ENCODE measurements at regions of chr12 and their contacts with region 1.

Region 1: GRCh38 chr12:106136263-106136662 is 2.5 kb downstream of the NUAK1 start:
- H3K4me3 ChIP-seq: no peak overlapping the region
- H3K27ac ChIP-seq: peak overlapping the region; percentile 8; the same call in 1 of the 2 replicates
- H3K4me1 ChIP-seq: peaks cover 18% of the 10 kb centered on the region
- CTCF ChIP-seq: peak; percentile 82

Region 2: GRCh38 chr12:105420659-105421240 is 715.5 kb before region 1 on chr12:
- CTCF ChIA-PET with region 1: interaction called, 55 read pairs
- POLR2A ChIA-PET with region 1: no interaction called
- H3K4me3 ChIP-seq: no peak overlapping the region
- H3K27ac ChIP-seq: no peak overlapping the region
- H3K4me1 ChIP-seq: no peaks in the 10 kb centered on the region
- CTCF ChIP-seq: peak; percentile 60; the same call in 1 of the 2 replicates

Region 3: GRCh38 chr12:105705765-105706164 is 430.5 kb before region 1 on chr12:
- CTCF ChIA-PET with region 1: interaction called, 39 read pairs
- POLR2A ChIA-PET with region 1: interaction called, 4 read pairs
- H3K4me3 ChIP-seq: no peak overlapping the region
- H3K27ac ChIP-seq: peak overlapping the region; percentile 50; the same call in 1 of the 2 replicates
- H3K4me1 ChIP-seq: peaks cover 11% of the 10 kb centered on the region
- CTCF ChIP-seq: peak; percentile 15; the same call in 1 of the 2 replicates

Region 4: GRCh38 chr12:106030210-106031175 is 105.8 kb before region 1 on chr12:
- CTCF ChIA-PET with region 1: interaction called, 15 read pairs
- POLR2A ChIA-PET with region 1: interaction called, 3 read pairs
- H3K4me3 ChIP-seq: peak overlapping the region; percentile 2
- H3K27ac ChIP-seq: no peak overlapping the region; the same call in 1 of the 2 replicates
- H3K4me1 ChIP-seq: peaks cover 10% of the 10 kb centered on the region
- CTCF ChIP-seq: no peak

Region 5: GRCh38 chr12:106113042-106113441 is 23.2 kb before region 1 on chr12:
- CTCF ChIA-PET with region 1: interaction called, 26 read pairs
- POLR2A ChIA-PET with region 1: interaction called, 4 read pairs
- H3K4me3 ChIP-seq: no peak overlapping the region
- H3K27ac ChIP-seq: no peak overlapping the region; the same call in 1 of the 2 replicates
- H3K4me1 ChIP-seq: peaks cover 24% of the 10 kb centered on the region
- CTCF ChIP-seq: no peak

Region 6: GRCh38 chr12:106149096-106149784 is 13.0 kb after region 1 on chr12:
- CTCF ChIA-PET with region 1: interaction called, 47 read pairs
- POLR2A ChIA-PET with region 1: interaction called, 15 read pairs
- H3K4me3 ChIP-seq: no peak overlapping the region
- H3K27ac ChIP-seq: no peak overlapping the region
- H3K4me1 ChIP-seq: peaks cover 14% of the 10 kb centered on the region
- CTCF ChIP-seq: peak; percentile 53

Region 7: GRCh38 chr12:106223485-106224354 is 87.5 kb after region 1 on chr12:
- CTCF ChIA-PET with region 1: interaction called, 21 read pairs
- POLR2A ChIA-PET with region 1: interaction called, 6 read pairs
- H3K4me3 ChIP-seq: no peak overlapping the region
- H3K27ac ChIP-seq: no peak overlapping the region
- H3K4me1 ChIP-seq: no peaks in the 10 kb centered on the region
- CTCF ChIP-seq: peak; percentile 82

Measured in HEK293 (cell line).